Vagina (tissue), 2 donors: ENCODE measurements at regions of chr4 and their contacts with region 1.

Region 1: DNA sequence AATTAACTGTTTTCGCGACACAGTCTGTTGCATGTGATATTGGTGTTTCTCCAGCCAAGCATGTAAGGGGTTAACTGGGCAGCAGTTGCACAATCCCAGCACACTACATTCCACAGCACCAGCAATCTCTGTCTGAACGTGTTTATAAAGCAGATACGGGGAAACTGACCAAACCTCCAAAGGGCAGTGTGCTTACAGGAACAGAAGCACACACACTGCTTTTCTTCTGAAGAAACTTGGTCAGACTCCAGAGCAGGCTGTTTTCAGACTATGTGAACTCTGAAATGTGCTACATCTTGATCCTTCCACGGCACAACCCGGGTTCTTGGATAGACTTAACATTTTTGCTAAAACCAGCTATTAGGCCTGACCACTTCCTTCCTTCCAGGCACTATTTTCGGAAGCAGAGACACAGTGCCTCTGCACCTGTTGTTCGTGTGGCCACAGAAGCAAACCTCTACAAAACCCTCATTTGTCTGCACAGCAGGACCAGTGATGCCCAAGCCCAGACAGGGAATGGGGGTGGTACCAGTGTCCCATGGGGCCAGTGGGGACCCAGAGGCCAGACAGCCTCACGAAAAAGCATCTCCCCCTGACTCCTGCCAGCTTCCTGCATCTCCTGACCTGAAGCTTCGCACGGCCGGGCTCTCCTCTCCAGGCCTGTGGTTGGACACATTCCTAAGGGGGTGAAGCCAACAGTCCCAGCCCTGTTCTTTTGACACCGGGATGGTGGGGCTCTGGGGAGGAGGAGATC is 90.1 kb downstream of the IRF2 start:
- DNase-seq: no peak
- H3K4me3 ChIP-seq: peak overlapping the region; percentile 18 to 34
- H3K27ac ChIP-seq: peak overlapping the region; percentile 81
- H3K4me1 ChIP-seq: peaks cover 50% of the 10 kb centered on the region
- H3K27me3 ChIP-seq: no peaks in the 10 kb centered on the region
- CTCF ChIP-seq: no peak
- POLR2A ChIP-seq: no peak

Region 2: GRCh38 chr4:184343502-184344177 is 40.6 kb before region 1 on chr4:
- intact Hi-C with region 1: loop called (anchors 5 kb)
- DNase-seq: no peak
- H3K4me3 ChIP-seq: peak overlapping the region; percentile 56
- H3K27ac ChIP-seq: peak overlapping the region; percentile 60
- H3K4me1 ChIP-seq: peaks cover 35% of the 10 kb centered on the region
- H3K27me3 ChIP-seq: no peaks in the 10 kb centered on the region
- CTCF ChIP-seq: no peak
- POLR2A ChIP-seq: no peak

Region 3: DNA sequence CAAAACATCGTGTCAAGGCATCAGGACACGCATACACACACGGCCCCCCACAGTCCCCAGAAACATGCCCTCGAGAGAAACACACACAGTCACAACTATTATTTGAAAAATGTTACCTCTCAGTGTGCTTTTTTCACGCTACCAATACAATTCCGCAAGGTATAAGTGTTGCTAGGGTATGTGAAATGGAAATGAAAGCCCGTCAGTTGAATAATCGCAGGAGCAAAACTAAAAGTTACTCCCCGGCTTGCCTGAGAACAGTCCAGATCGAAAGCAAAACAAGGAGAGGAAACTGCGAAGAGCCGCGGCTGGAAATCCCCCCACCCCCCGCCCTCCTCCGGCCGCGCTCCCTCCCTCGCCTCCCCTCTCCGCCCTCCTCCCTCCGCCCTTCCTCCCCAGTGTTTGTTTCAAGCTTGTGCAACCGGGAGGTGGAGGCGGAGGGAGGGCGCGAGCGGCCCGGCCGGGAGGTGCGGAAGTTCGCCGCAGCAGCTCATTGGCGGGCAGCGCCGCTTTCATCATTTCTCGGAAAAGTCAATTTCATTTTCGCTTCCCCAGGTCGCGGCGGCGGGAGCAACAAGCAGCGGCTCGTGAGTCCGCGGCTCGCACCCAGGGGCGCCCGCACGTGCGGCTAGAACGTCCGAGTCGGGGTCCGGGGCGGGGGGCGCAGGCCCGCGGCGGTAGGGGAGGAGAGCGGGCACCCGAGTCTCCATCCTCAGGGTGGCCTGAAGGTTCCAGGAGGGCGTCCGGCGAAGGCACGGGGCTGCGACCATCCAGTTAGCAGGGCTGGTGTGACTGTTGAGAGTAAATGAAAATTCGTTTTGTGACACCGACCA is 90.2 kb after region 1 on chr4 and contains the start of gene IRF2:
- intact Hi-C with region 1: loop called (anchors 10 kb)
- DNase-seq: peak in 1 of 2 donors; percentile 98
- H3K4me3 ChIP-seq: peak within 1 kb of the TSS; percentile 77 to 95
- H3K27ac ChIP-seq: peak within 1 kb of the TSS; percentile 99
- H3K4me1 ChIP-seq: peaks cover 53% of the 10 kb centered on the region
- H3K27me3 ChIP-seq: no peaks in the 10 kb centered on the region
- CTCF ChIP-seq: peak in 1 of 3 experiments; percentile 21
- POLR2A ChIP-seq: peak in 1 of 2 donors; percentile 91
- total RNA-seq, gene IRF2: 18.7 TPM